ENCODE measurements at regions of chr16 and their contacts with region 1.

Region 1: DNA sequence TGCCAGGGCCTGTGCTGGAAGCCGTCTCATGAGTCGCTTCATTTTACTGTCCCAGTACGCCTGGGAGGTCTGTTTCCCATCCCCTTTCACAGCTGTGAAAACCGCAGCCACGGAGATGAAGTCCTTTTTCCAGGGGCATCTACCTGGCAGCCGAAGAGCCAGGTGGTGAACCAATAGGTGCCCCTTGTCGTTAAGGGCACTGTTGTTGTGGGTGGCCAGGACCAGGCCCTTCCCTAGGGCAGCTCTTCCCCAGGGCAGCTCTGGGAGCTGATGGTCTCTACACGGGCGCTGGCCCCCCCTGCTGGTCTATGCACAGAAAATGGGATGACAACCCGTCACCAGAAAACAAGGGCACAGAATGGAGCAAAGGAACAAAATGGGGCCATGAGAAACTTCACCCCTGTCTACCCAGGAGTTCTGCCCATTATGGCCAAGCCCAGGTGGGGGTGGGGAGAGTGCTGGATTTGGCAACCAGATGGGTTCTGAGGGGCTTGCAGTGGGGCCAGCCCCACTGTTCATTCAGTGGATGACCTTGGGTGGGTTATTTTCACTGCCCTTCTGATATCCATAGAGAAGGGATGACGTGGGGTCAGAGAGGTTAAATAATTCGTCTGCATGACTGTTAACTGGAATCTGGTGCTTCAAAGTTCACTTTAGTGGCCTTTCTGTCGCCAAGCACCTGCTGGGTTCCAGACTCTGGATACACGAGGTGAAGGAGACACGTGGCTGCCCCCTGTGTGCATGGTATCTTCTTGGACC is 11.5 kb downstream of the RMI2 start:
- DNase-seq: peak; percentile 58 to 74
- ATAC-seq: peak; percentile 80 to 90
- H3K4me3 ChIP-seq: no peak overlapping the region
- H3K27ac ChIP-seq: peak overlapping the region in 1 of 2 experiments; percentile 58; a peak in 2 of 6 replicates
- H3K4me1 ChIP-seq: peaks cover 18% of the 10 kb centered on the region
- CTCF ChIP-seq: peak; percentile 60
- EP300 ChIP-seq: no peak
- POLR2A ChIP-seq: no peak
- RAD21 ChIP-seq: peak; percentile 77 to 79

Region 2: DNA sequence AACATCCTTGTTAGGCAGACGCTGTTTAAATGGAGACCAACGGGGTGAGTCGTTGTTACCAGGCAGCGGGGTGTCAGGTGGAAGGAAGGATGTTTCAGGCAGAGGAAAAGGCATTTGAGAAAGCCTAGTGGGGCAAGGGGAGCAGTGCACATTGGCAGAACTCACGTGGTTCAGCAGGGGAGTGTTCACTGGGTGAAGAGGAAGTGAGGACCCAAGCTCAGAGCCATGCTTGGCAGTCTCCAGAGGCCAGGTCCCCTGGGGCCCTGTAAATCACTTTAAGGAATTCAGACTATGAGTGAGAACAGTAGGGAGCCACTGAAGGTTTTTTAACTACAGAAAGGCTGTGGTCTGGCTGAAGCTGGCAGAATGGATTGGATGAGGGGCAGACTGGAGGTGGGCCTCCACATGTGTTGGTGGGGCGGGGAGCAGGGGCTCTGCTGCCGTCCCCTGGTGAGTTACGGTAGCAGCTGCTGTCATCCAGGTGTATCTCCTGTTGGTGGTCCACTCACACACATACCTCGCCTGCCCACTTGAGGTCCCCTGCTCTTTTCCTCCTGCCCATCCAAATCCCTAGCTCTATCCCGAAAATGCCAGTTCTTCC is 407.3 kb before region 1 on chr16:
- CTCF ChIA-PET with region 1: interaction called, 10 read pairs
- POLR2A ChIA-PET with region 1: no interaction called
- DNase-seq: peak in 1 of 2 experiments; percentile 42
- ATAC-seq: peak; percentile 24 to 65; a peak in 3 of 6 replicates
- H3K4me3 ChIP-seq: no peak overlapping the region
- H3K27ac ChIP-seq: no peak overlapping the region
- H3K4me1 ChIP-seq: peaks cover 21% of the 10 kb centered on the region; the same call in 2 of the 3 replicates
- CTCF ChIP-seq: no peak
- EP300 ChIP-seq: no peak
- POLR2A ChIP-seq: no peak
- RAD21 ChIP-seq: no peak

Region 3: DNA sequence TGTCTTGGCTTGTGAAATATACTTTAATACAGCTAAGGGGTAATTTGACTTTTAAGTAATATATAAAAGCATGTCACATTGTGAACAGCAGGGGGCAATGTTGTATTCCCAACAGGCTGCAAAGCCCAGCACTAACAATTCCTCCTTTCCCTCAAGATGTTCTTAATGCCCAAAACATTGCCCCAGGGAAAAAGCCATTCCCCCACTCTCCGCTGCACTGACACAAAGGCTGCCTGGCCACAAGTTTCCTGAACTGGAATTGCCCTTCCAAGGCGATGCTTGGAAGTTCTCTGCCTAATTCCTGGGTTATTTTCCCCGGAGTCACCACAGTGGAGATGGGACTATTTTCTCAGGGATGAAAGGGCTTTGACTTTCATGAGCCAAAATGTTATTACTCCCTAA is 385.2 kb before region 1 on chr16:
- CTCF ChIA-PET with region 1: interaction called, 17 read pairs
- POLR2A ChIA-PET with region 1: no interaction called
- DNase-seq: peak; percentile 51 to 77
- ATAC-seq: peak; percentile 63 to 81; a peak in 4 of 6 replicates
- H3K4me3 ChIP-seq: no peak overlapping the region
- H3K27ac ChIP-seq: peak overlapping the region in 1 of 2 experiments; percentile 15; a peak in 1 of 6 replicates
- H3K4me1 ChIP-seq: no peaks in the 10 kb centered on the region
- CTCF ChIP-seq: peak; percentile 80
- EP300 ChIP-seq: no peak
- POLR2A ChIP-seq: no peak
- RAD21 ChIP-seq: peak; percentile 89 to 91

Region 4: GRCh38 chr16:11263737-11264136 is 93.0 kb before region 1 on chr16:
- CTCF ChIA-PET with region 1: interaction called, 17 read pairs
- POLR2A ChIA-PET with region 1: no interaction called
- DNase-seq: no peak
- ATAC-seq: no peak
- H3K4me3 ChIP-seq: no peak overlapping the region
- H3K27ac ChIP-seq: no peak overlapping the region
- H3K4me1 ChIP-seq: no peaks in the 10 kb centered on the region
- CTCF ChIP-seq: no peak
- EP300 ChIP-seq: no peak
- POLR2A ChIP-seq: no peak
- RAD21 ChIP-seq: no peak

Measured in A549 (cell line).